Adrenal gland (tissue), 19 donors: ENCODE measurements at regions of chr9 and their contacts with region 1.

Region 1: GRCh38 chr9:98989036-98990000 is 45.6 kb downstream of the COL15A1 start:
- DNase-seq: peak; percentile 50 to 89 (median 82)
- H3K4me3 ChIP-seq: no peak overlapping the region
- H3K27ac ChIP-seq: peak overlapping the region in 3 of 5 donors; percentile 14 to 85 (median 66)
- H3K4me1 ChIP-seq: peaks cover 0 to 16% of the 10 kb centered on the region in 2 donors
- H3K27me3 ChIP-seq: no peaks in the 10 kb centered on the region
- CTCF ChIP-seq: peak in 3 of 6 experiments; percentile 13 to 28 (median 18)
- POLR2A ChIP-seq: no peak

Region 2: GRCh38 chr9:98873951-98874371 is 115.4 kb before region 1 on chr9:
- intact Hi-C with region 1: loop called in 1 of 2 experiments (anchors 10 kb)
- DNase-seq: peak; percentile 75 to 89 (median 86)
- H3K4me3 ChIP-seq: no peak overlapping the region
- H3K27ac ChIP-seq: no peak overlapping the region
- H3K4me1 ChIP-seq: peaks cover 8 to 10% of the 10 kb centered on the region in 2 donors
- H3K27me3 ChIP-seq: no peaks in the 10 kb centered on the region
- CTCF ChIP-seq: no peak
- POLR2A ChIP-seq: no peak